HepG2 (cell line): ENCODE measurements at regions of chr11 and their contacts with region 1.

Region 1: DNA sequence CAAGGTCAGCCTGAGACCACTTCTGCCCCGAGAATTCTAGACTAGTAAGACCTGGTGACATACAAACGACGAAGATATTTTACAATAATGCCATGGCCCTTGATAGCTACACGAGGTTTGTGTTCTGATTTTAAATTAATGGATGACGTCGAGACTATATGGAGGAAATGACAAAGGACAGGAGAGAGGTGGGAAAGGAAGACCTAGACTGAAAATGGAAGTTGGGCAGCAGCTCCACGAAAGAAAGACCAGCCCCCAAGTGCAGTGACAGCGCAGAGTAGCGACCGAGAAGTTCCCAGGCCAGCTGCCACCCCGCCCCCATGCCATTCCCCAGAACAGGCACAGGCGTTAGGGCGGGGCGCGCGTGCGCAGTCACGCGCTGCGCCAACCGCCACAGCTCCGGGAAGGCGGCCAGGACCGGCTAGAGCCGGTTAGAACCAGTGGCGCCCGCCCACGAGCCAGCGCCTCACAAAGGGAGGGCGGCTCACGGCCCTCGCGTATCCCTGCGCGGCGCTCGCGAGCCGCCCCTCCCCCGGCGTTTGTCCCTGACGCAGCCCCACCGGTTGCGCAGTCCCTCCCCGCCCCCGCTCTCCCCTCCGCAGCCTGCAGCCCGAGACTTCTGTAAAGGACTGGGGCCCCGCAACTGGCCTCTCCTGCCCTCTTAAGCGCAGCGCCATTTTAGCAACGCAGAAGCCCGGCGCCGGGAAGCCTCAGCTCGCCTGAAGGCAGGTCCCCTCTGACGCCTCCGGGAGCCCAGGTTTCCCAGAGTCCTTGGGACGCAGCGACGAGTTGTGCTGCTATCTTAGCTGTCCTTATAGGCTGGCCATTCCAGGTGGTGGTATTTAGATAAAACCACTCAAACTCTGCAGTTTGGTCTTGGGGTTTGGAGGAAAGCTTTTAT is 1.5 kb upstream of the MALAT1 start:
- DNase-seq: peak; percentile 95
- ATAC-seq: peak; percentile 88
- H3K4me3 ChIP-seq: peak overlapping the region; percentile 85 to 93 (median 89)
- H3K27ac ChIP-seq: peak overlapping the region; percentile 100
- H3K4me1 ChIP-seq: peaks cover 37% of the 10 kb centered on the region
- H3K27me3 ChIP-seq: no peaks in the 10 kb centered on the region; a peak in 2 of 5 replicates
- CTCF ChIP-seq: peak; percentile 36
- EP300 ChIP-seq: peak; percentile 62 to 85; a peak in 3 of 4 replicates
- POLR2A ChIP-seq: peak; percentile 60 to 84
- RAD21 ChIP-seq: peak; percentile 76

Region 2: GRCh38 chr11:65329944-65330403 is 167.4 kb before region 1 on chr11:
- CTCF ChIA-PET with region 1: no interaction called
- POLR2A ChIA-PET with region 1: interaction called, 13 read pairs
- in situ Hi-C with region 1: no loop called
- intact Hi-C with region 1: no loop called
- DNase-seq: peak; percentile 86
- ATAC-seq: peak; percentile 60
- H3K4me3 ChIP-seq: peak overlapping the region; percentile 20 to 41 (median 22); a peak in 2 of 6 replicates
- H3K27ac ChIP-seq: no peak overlapping the region
- H3K4me1 ChIP-seq: peaks cover 19% of the 10 kb centered on the region
- H3K27me3 ChIP-seq: no peaks in the 10 kb centered on the region; a peak in 1 of 5 replicates
- CTCF ChIP-seq: peak; percentile 82
- EP300 ChIP-seq: no peak
- POLR2A ChIP-seq: no peak
- RAD21 ChIP-seq: peak; percentile 65

Region 3: GRCh38 chr11:65366340-65366773 is 131.0 kb before region 1 on chr11:
- CTCF ChIA-PET with region 1: no interaction called
- POLR2A ChIA-PET with region 1: interaction called, 38 read pairs
- in situ Hi-C with region 1: no loop called
- intact Hi-C with region 1: no loop called
- DNase-seq: peak; percentile 84
- ATAC-seq: peak; percentile 81
- H3K4me3 ChIP-seq: peak overlapping the region in 2 of 3 experiments; percentile 15 to 50; a peak in 2 of 6 replicates
- H3K27ac ChIP-seq: no peak overlapping the region
- H3K4me1 ChIP-seq: peaks cover 48% of the 10 kb centered on the region
- H3K27me3 ChIP-seq: no peaks in the 10 kb centered on the region
- CTCF ChIP-seq: peak; percentile 88
- EP300 ChIP-seq: no peak
- POLR2A ChIP-seq: no peak
- RAD21 ChIP-seq: peak; percentile 87

Region 4: GRCh38 chr11:65448418-65449105 is 48.8 kb before region 1 on chr11:
- CTCF ChIA-PET with region 1: no interaction called
- POLR2A ChIA-PET with region 1: interaction called, 55 read pairs
- in situ Hi-C with region 1: loop called (anchors 10 kb)
- intact Hi-C with region 1: no loop called
- DNase-seq: no peak
- ATAC-seq: peak; percentile 18
- H3K4me3 ChIP-seq: no peak overlapping the region
- H3K27ac ChIP-seq: no peak overlapping the region
- H3K4me1 ChIP-seq: peaks cover 48% of the 10 kb centered on the region
- H3K27me3 ChIP-seq: no peaks in the 10 kb centered on the region
- CTCF ChIP-seq: no peak
- EP300 ChIP-seq: no peak
- POLR2A ChIP-seq: peak in 1 of 2 experiments; percentile 50; a peak in 1 of 4 replicates
- RAD21 ChIP-seq: no peak

Region 5: DNA sequence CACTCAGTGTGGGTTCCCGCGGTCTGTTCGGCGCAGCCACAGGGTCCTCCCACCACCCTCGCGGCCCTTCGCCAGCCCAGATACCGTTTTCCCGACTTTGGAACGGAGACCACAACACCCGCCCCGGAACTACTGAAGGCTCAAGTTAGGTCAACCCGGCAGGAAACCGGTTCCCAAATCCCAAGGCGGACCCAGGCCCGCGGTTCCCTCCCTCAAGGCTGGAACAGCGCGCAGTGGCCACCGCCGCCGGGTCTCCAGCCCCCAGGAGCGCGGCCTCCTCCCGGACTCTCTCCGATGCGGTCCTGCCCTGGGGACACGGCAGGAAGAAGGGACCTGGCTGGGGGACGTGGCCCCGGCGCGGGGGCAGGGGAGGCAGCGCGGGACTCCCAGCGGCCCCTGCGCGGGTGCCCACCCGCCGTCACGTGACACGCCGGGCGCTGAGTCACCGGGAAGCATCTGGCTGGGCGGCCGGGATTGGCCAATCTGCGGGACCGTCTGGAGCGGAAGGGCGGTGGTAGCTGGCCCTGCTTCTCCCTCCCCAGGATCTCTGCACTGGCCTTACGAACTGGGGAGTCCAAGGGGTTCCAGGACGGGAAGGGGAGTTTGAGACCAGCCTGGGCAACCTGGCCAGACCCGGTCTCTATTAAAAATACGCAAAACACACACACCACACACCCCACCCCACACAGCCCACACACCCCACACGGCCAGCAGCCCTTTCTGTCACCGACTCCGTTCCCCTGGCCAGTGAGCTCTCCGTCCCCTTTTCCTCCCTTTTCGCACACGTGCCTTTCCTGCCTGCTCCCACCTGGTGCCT is 20.0 kb before region 1 on chr11:
- CTCF ChIA-PET with region 1: no interaction called
- POLR2A ChIA-PET with region 1: interaction called, 1,590 read pairs
- in situ Hi-C with region 1: no loop called
- intact Hi-C with region 1: no loop called
- DNase-seq: peak; percentile 88
- ATAC-seq: peak; percentile 85
- H3K4me3 ChIP-seq: peak overlapping the region; percentile 75 to 90 (median 82)
- H3K27ac ChIP-seq: peak overlapping the region; percentile 95
- H3K4me1 ChIP-seq: peaks cover 62% of the 10 kb centered on the region
- H3K27me3 ChIP-seq: no peaks in the 10 kb centered on the region; a peak in 1 of 5 replicates
- CTCF ChIP-seq: no peak
- EP300 ChIP-seq: peak; percentile 59; a peak in 3 of 4 replicates
- POLR2A ChIP-seq: peak; percentile 72 to 86
- RAD21 ChIP-seq: peak; percentile 49; the same call in 1 of the 2 replicates

Region 6: DNA sequence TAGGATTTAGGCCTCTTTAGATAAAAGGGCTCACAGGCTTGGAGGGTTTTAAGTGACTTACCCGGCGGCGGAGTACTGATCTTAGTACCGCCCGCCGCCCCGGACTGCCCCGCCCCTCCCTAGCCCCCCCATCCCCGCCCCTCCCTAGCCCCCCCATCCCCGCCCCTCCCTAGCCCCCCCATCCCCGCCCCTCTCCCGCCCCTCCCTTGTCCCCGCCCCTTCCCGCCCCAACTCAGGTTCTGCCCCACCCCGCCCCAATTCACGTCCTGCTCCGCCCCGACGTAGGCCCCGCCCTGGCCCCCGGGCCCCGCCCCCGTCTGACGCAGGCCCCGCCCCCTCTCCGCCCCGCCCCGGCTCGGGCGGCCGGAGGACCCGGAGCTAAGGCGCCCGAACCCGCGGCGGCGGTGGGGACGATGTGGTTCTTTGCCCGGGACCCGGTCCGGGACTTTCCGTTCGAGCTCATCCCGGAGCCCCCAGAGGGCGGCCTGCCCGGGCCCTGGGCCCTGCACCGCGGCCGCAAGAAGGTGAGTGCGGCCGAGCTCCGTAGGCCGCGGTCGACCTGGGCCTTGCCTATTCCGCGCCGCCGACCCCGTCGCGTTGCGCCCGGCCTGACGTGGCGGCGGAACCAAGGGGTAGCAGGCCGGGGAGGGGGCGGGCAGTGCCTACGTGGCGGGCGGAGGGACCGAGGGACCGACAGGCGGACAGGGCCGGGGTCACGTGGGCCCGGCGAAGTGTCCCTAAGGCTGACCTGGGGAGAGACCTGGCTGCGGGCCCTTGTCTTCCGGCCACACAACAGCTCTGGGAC is 27.6 kb after region 1 on chr11 and contains the start of gene SCYL1:
- CTCF ChIA-PET with region 1: no interaction called
- POLR2A ChIA-PET with region 1: interaction called, 35 read pairs
- in situ Hi-C with region 1: no loop called
- intact Hi-C with region 1: no loop called
- DNase-seq: no peak
- ATAC-seq: peak; percentile 25
- H3K4me3 ChIP-seq: peak within 1 kb of the TSS; percentile 93 to 97 (median 96)
- H3K27ac ChIP-seq: peak within 1 kb of the TSS; percentile 86
- H3K4me1 ChIP-seq: peaks cover 72% of the 10 kb centered on the region
- H3K27me3 ChIP-seq: no peaks in the 10 kb centered on the region; a peak in 1 of 5 replicates
- CTCF ChIP-seq: no peak
- EP300 ChIP-seq: no peak
- POLR2A ChIP-seq: peak; percentile 55 to 62; a peak in 3 of 4 replicates
- RAD21 ChIP-seq: peak; percentile 47; the same call in 1 of the 2 replicates
- total RNA-seq, gene SCYL1: 61.7 and 65.9 TPM in 2 replicates